Aorta (tissue), 5 donors: ENCODE measurements at regions of chr11 and their contacts with region 1.

Region 1: DNA sequence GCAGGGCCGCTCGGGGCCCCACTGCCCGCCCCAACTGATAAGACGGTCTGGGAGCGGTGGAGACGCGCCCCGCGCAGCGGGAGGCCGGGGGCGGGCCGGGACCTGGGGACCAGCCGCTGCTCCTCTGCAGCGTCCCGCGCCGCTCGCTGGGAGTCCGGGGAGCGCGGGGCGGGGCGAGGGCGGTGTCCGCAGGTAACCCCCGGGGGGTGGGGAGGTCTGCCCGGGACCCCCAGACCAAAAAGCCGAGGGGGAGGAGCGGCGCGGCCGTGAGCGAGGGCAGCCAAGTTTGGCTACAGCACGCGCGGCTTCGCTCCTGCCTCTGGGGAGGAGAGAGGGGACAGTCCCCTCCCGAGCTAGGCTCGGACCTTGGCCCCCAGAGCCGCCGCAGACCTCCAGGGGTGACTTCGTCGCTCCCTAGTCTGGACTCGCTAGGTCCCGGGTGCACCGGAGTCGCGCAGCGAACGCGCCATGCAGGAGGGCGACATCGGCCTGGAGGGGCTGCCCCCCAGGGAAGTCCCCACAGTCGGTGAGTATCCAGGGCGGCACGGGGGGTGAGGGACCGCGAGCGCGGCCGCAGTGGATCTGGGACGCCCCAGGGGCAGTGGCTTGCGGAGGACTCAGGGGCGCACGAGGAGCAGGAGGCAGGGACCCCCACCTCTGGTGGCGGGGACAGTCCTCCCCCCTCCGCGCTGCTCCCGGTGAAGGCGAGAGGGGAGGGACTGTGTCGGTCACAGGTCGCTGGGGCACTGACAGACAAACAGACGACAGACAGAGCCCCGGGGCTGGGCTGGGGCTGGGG is 92.3 kb upstream of the ANO1 start:
- DNase-seq: no peak
- ATAC-seq: peak; percentile 53
- H3K4me3 ChIP-seq: peak overlapping the region; percentile 27 to 43
- H3K27ac ChIP-seq: peak overlapping the region; percentile 70 to 96
- H3K4me1 ChIP-seq: no peaks in the 10 kb centered on the region
- H3K27me3 ChIP-seq: no peaks in the 10 kb centered on the region

Region 2: DNA sequence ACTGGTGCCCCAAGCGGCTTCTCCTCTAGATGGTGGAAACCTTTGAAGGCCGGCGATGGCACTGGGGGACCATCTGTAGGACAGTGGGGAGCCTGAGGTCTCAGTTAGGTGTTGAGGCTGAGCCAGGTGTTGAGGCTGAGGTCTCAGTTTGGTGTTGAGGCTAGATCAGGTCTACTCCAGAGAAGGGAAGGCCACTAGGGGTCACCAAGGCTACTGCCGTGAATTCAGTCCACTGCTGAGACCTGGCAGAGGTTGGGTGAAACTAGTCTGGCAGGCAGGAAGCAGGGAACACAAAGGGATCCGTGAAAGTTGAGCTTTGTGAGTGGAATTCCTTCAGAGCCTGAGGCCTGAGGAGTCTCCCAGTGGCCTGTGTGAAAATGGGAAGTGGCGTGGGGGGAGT is 42.8 kb before region 1 on chr11:
- intact Hi-C with region 1: loop called in 1 of 2 experiments (anchors 5 kb)
- DNase-seq: peak; percentile 26 to 48
- ATAC-seq: no peak
- H3K4me3 ChIP-seq: no peak overlapping the region
- H3K27ac ChIP-seq: peak overlapping the region in 1 of 2 donors; percentile 14
- H3K4me1 ChIP-seq: no peaks in the 10 kb centered on the region
- H3K27me3 ChIP-seq: no peaks in the 10 kb centered on the region

Region 3: DNA sequence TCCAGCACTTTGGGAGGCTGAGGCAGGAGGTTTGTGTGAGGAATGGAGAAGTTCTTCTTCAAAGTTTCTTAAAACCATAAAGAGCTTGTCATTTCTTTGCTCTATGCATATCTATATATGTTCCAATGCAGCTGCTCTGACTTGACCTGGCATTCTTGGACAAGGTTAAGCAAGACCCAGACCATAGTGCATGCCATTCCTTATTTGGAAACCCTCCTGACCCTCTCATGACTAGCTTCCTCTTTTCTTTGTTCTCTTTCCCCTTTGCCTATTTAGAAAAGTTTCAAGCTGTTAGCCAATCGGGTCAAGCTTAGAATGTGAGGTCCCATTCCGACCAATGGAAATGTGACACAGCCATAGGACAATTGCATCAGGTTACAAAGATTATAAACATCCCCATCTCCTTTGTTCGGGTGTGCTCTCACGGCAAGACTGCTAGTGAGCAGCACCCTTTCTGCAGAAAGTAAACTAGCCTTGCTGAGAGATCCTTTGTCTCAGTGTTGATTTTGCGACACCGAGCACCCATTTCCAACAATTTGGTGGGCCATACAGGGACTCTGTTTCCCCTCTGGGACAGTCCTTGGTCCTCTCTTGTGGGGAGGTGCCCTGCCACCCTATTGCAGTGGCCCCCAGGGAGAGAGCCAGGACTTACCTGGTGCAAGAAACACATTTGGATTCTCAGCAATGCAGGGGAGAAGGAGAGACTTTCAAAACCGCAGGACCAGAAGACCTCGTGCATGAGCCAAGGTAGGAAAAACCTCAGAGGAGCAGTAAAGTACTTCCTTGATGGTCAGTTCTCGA is 52.4 kb after region 1 on chr11:
- intact Hi-C with region 1: no loop called
- DNase-seq: peak in 1 of 2 donors; percentile 9
- ATAC-seq: no peak
- H3K4me3 ChIP-seq: no peak overlapping the region
- H3K27ac ChIP-seq: no peak overlapping the region
- H3K4me1 ChIP-seq: no peaks in the 10 kb centered on the region
- H3K27me3 ChIP-seq: no peaks in the 10 kb centered on the region

Region 4: DNA sequence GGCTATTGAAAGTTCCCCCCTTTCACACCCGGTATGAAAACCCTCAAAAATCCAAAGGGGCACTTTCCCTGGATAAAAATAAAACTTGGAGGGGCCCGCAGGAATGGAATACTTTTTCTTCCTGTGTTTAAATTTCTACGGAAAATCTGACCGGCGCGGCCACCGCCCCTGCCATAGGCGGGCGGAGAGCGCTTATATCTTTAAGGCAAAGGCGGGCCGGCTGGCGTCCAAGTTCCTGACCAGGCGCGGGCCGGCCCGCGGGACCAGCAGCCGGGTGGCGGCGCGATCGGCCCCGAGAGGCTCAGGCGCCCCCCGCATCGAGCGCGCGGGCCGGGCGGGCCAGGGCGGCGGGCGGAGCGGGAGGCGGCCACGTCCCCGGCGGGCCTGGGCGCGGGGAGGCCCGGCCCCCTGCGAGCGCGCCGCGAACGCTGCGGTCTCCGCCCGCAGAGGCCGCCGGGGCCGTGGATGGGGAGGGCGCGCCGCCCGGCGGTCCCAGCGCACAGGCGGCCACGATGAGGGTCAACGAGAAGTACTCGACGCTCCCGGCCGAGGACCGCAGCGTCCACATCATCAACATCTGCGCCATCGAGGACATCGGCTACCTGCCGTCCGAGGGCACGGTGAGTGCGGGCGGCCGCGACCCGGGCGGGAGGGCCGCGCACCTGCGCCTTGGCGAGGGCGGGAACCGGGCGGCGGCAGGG is 92.4 kb after region 1 on chr11 and contains the start of gene ANO1:
- intact Hi-C with region 1: loop called (anchors 5 kb)
- DNase-seq: peak; percentile 50 to 83
- ATAC-seq: no peak
- H3K4me3 ChIP-seq: peak within 1 kb of the TSS; percentile 67 to 81
- H3K27ac ChIP-seq: peak within 1 kb of the TSS; percentile 83 to 92
- H3K4me1 ChIP-seq: peaks cover 0 to 4% of the 10 kb centered on the region in 2 donors
- H3K27me3 ChIP-seq: no peaks in the 10 kb centered on the region
- total RNA-seq, gene ANO1: 65.6 to 136 TPM

Region 5: GRCh38 chr11:70099578-70100279 is 113.9 kb after region 1 on chr11:
- intact Hi-C with region 1: loop called in 1 of 2 experiments (anchors 5 kb)
- DNase-seq: peak in 1 of 2 donors; percentile 79
- ATAC-seq: peak; percentile 30
- H3K4me3 ChIP-seq: no peak overlapping the region
- H3K27ac ChIP-seq: peak overlapping the region in 1 of 2 donors; percentile 60
- H3K4me1 ChIP-seq: peaks cover 0 to 4% of the 10 kb centered on the region in 2 donors
- H3K27me3 ChIP-seq: no peaks in the 10 kb centered on the region